ENCODE measurements at regions of chr6 and their contacts with region 1.

Region 1: GRCh38 chr6:33248925-33249731 is 22.5 kb downstream of the VPS52 start:
- DNase-seq: peak; percentile 98
- ATAC-seq: peak; percentile 95
- H3K4me3 Mint-ChIP-seq: peak overlapping the region; percentile 88
- H3K27ac Mint-ChIP-seq: peak overlapping the region; percentile 92
- H3K4me1 Mint-ChIP-seq: peaks cover 37% of the 10 kb centered on the region
- H3K27me3 Mint-ChIP-seq: peaks cover 3% of the 10 kb centered on the region

Region 2: DNA sequence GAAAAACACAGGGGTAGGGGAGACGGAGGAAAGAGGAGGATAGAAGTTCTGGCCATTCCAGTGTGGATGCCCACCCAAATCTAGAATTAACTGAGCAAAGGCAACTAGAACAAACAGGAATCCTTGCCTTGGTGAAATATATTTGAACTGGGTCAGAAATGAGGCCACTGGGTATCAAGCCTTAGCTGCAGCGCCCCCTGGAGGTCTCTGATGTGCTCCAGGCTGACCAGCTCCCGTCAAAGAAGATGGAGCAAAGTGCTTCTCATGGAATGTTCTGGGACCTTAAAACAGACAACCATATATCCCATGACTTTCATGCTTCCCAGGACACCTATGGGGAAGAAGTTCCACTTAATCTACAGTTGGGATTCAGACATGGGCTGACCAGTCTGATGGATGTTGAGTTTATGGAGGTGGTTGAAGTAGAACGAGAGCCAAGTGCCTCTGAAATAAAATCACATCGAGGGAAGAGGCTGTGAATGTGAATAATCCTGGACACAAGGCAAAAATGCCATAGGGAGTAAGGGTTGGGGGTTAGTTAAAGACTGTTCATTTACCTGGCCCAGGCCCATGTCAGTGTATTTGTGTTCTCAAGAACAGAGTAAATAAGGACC is 122.9 kb before region 1 on chr6:
- CTCF ChIA-PET with region 1: interaction called, 135 read pairs
- POLR2A ChIA-PET with region 1: interaction called, 3 read pairs
- DNase-seq: peak; percentile 78
- ATAC-seq: peak; percentile 84
- H3K4me3 Mint-ChIP-seq: no peak overlapping the region
- H3K27ac Mint-ChIP-seq: no peak overlapping the region
- H3K4me1 Mint-ChIP-seq: peaks cover 5% of the 10 kb centered on the region
- H3K27me3 Mint-ChIP-seq: peaks cover 30% of the 10 kb centered on the region

Region 3: DNA sequence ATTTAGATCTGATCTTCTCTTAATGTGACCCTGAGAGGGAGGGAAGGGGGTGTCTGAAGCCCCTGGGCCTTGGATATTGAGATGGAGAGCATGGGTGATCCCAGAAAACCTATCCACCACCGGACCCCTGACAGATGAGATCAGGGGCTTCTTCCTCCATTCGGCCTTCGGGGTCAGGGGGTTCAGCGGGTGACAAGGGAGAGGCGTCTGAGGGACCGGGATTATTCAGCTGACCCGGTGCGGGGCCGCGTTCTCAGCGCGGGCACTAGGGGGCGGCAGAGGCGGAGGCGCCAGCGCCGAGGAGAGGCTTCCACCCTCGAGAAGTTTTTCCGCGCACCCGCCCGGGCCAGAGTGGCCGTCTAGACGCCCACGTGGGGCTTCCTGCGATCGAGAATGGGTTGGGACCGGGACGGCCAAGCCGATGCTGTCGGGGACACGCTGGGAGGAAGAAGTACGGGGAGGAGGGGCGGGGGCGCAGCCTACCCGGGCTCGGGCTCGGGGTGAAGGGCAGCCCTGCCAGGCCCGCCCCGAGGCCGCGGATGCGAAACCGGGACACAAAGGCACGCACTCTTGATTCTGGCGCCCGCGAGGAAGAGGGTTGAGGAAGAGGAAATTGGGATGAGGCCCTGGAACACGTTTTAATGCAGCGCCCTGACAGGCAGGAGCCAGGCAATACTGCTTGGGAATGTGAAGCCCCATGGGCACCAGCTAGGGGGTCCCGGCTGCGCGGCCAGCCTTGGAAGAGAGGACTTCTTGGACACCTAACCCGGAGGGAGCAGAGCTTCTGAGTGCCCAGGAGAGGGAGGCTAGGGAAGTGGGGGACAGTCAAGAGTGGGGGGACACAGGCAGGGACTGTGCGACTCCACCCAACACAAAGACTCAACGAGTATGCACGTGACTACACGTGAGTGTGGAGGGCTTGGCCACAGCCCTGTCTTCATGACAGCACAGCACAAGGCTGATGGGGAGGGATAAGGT is 87.5 kb before region 1 on chr6:
- CTCF ChIA-PET with region 1: interaction called, 105 read pairs
- POLR2A ChIA-PET with region 1: no interaction called
- DNase-seq: peak; percentile 87
- ATAC-seq: peak; percentile 98
- H3K4me3 Mint-ChIP-seq: peak overlapping the region; percentile 80
- H3K27ac Mint-ChIP-seq: peak overlapping the region; percentile 89
- H3K4me1 Mint-ChIP-seq: peaks cover 20% of the 10 kb centered on the region
- H3K27me3 Mint-ChIP-seq: peaks cover 3% of the 10 kb centered on the region

Region 4: DNA sequence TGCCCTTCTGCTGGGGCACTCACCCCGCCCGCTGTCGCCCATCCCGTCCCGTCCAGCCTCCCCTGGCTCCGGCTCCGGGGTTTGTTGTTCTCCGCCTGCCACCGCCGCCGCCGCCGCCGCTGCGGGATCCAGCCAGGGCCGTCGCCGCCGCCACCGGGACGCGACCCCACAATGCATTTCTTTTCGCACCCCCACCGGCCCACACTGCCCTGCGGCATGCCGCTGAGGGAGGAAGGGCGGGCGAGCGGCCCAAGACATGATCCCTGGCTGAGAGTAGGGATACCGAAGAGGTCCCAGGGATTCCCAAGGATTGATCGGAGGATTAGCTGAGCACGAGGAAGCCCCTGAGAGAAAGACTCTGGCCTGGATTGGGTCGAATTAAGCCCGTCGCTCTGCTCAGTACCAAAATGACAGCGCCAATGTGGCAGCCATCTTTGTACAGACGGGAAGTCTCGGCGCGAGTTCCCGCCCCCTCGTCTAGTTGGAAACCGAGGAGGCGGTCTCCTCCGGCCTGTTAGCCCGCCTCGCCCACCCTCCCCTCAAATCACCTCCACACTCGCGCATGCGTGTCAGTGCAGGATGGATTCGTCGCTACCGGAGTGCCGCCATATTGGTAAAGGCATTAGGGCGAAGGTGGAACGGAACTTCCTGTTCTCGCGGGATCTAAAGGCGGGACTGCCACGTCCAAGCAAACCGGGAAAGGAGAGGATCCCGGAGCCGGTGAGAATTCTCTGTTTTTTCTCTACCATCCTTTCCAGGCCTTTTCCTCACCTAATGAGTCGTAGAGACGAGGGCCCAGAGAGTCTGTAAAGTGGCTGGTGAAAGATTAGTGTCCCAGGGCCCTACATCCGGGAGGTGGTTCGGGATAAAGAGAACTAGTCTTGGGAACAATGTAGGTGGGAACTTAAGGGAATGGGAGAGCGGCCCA is 48.6 kb before region 1 on chr6 and contains the starts of genes RXRB and SLC39A7:
- CTCF ChIA-PET with region 1: interaction called, 52 read pairs
- POLR2A ChIA-PET with region 1: interaction called, 12 read pairs
- DNase-seq: peak; percentile 100
- ATAC-seq: peak; percentile 73
- H3K4me3 Mint-ChIP-seq: peak within 1 kb of the TSS; percentile 100
- H3K27ac Mint-ChIP-seq: peak within 1 kb of the TSS; percentile 98
- H3K4me1 Mint-ChIP-seq: peaks cover 65% of the 10 kb centered on the region
- H3K27me3 Mint-ChIP-seq: no peaks in the 10 kb centered on the region
- total RNA-seq, gene RXRB: 33.5 to 34.5 TPM
- total RNA-seq, gene SLC39A7: 45.6 to 50.8 TPM

Region 5: DNA sequence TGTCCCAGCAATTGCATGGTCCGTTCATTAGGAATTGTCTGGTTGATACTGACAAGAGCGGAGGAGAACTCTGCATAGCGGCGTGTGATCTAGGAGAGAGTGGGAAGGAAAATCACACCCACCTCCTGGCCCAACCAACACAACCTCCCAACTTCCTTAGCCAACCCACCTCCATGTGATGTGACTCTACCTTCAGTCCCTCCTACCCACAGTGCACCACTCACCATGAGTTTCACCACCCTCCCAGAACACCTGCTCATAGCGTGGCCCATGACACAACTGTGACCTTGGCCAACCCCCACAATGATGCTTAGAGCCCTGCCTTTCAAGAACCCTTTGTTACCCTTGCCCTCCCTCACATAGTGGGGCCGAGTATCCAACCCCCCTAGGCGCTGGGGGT is 14.9 kb after region 1 on chr6:
- CTCF ChIA-PET with region 1: interaction called, 17 read pairs
- POLR2A ChIA-PET with region 1: interaction called, 3 read pairs
- DNase-seq: no peak
- ATAC-seq: no peak
- H3K4me3 Mint-ChIP-seq: no peak overlapping the region
- H3K27ac Mint-ChIP-seq: no peak overlapping the region
- H3K4me1 Mint-ChIP-seq: peaks cover 4% of the 10 kb centered on the region
- H3K27me3 Mint-ChIP-seq: no peaks in the 10 kb centered on the region